GM10248 (cell line): ENCODE measurements at regions of chr20 and their contacts with region 1.

Region 1: GRCh38 chr20:35329435-35330139 is 37.4 kb upstream of the FAM83C start:
- DNase-seq: peak; percentile 41
- CTCF ChIP-seq: peak; percentile 40

Region 2: GRCh38 chr20:35311409-35311808 is 18.2 kb before region 1 on chr20:
- CTCF ChIA-PET with region 1: interaction called, 13 read pairs
- POLR2A ChIA-PET with region 1: no interaction called
- DNase-seq: no peak
- CTCF ChIP-seq: no peak

Region 3: GRCh38 chr20:35318502-35319157 is 11.0 kb before region 1 on chr20:
- CTCF ChIA-PET with region 1: interaction called, 18 read pairs
- POLR2A ChIA-PET with region 1: no interaction called
- DNase-seq: no peak
- CTCF ChIP-seq: no peak

Region 4: GRCh38 chr20:35339636-35340035 is 10.0 kb after region 1 on chr20:
- CTCF ChIA-PET with region 1: no interaction called
- POLR2A ChIA-PET with region 1: no interaction called
- DNase-seq: no peak
- CTCF ChIP-seq: no peak

Region 5: DNA sequence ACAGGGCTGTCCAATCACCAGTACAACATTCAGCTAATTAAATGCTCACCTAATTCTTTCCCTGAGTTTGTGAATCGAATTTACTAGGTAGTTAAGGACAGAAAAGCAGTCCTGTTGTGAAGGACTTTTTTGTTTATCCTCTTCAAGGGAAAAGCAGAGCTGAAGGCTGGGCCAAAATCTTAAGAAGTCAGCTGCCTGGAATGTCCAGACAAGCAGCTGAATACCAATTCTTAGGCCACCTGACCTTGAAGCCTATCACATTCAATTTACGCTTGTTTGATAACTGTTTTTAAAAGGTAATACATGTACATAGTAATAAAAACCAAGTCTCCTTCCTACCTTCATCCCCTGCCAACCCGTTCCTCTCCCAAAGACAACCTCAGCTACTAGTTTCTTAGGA is 25.8 kb after region 1 on chr20:
- CTCF ChIA-PET with region 1: no interaction called
- POLR2A ChIA-PET with region 1: no interaction called
- DNase-seq: no peak
- CTCF ChIP-seq: no peak

Region 6: DNA sequence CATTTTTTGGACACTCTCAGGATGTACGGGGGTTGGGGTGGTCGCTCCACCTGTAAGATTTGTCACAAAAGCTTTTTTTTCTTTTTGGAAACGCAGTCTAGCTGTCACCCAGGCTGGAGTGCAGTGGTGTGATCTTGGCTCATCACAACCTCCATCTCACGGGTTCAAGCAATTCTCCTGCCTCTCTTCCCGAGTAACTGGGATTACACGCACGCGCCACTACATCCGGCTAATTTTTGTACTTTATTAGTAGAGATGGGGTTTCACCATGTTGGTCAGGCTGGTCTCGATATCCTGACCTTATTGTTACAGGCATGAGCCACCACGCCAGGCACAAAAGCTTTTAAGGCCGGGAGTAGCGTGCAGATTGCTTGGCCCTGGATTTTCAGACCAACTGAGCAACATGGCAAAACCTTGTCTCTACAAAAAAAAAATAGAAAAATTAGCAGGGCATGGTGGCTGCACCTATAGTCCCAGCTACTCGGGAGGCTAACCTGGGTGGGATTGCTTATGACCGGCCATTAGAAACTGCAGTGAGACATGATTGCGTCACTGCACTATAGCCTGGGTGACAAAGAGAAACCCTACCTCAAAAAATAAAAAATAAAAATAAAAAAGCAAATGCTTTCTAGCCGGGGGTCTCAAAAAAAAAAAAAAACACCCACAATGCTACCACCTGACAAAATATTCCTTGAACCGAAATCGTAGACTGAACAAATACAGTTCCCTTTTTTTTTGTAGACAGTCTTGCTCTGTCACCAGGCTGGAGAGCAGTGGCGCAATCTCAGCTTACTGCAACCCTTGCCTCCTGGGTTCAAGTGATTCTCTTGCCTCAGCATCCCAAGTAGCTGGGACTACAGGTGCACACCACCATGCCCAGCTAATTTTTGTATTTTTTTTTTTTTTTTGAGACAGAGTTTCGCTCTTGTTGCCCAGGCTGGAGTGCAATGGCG is 397.4 kb after region 1 on chr20:
- CTCF ChIA-PET with region 1: no interaction called
- POLR2A ChIA-PET with region 1: no interaction called
- DNase-seq: no peak
- CTCF ChIP-seq: no peak